ENCODE measurements at regions of chr5 and their contacts with region 1.

Region 1: GRCh38 chr5:150458819-150459557 is 9.4 kb upstream of the RPS14 start:
- DNase-seq: peak; percentile 90
- ATAC-seq: peak; percentile 93
- H3K4me3 Mint-ChIP-seq: peak overlapping the region; percentile 31
- H3K27ac Mint-ChIP-seq: peak overlapping the region; percentile 83
- H3K4me1 Mint-ChIP-seq: peaks cover 45% of the 10 kb centered on the region
- H3K27me3 Mint-ChIP-seq: no peaks in the 10 kb centered on the region

Region 2: GRCh38 chr5:150180241-150181026 is 278.6 kb before region 1 on chr5:
- CTCF ChIA-PET with region 1: no interaction called
- POLR2A ChIA-PET with region 1: no interaction called
- DNase-seq: no peak
- ATAC-seq: no peak
- H3K4me3 Mint-ChIP-seq: no peak overlapping the region
- H3K27ac Mint-ChIP-seq: no peak overlapping the region
- H3K4me1 Mint-ChIP-seq: no peaks in the 10 kb centered on the region
- H3K27me3 Mint-ChIP-seq: peaks cover 7% of the 10 kb centered on the region

Region 3: DNA sequence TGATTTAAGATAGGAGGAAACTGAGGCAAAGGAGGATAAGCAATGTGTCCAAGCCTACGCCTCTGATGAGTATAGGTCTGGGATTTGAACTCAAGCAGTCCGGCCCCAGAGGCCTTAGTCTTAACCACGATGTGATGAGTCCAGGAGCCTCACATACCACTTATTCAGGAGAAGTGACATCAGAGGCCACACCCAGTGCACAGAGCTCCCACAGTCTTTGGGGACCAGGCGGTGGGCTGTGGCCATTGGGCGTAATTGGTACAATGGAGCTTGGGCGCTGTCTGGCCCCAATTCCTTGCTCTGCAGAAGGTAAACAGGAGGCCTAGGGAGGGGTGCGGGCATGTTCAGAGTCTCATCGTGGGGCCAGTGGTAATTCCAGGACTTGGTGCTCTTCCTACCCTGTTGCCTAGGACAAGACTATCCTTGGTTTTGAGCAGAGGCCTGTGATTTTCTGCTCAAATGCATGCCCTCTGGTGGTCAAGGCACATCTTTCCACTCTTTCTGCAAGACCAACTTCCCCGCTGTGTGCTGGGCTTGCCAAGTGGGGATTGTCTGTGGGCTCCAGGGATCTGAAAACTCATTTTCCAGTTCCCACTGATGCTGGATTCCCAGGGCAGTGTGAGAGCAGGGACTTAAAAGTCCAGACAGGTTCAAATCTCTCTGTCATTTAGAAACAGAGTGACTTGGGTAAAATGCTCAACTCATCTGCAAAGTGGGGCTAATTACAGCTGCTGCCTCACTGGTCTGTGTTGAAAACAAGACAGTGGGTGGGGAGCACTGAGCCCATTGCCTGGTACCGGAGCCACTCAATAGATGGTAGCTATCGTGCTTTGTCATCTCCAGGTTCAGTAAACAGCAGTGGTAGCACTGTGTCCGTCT is 64.7 kb after region 1 on chr5:
- CTCF ChIA-PET with region 1: interaction called, 45 read pairs
- POLR2A ChIA-PET with region 1: no interaction called
- DNase-seq: peak; percentile 47
- ATAC-seq: peak; percentile 69
- H3K4me3 Mint-ChIP-seq: no peak overlapping the region
- H3K27ac Mint-ChIP-seq: no peak overlapping the region
- H3K4me1 Mint-ChIP-seq: peaks cover 5% of the 10 kb centered on the region
- H3K27me3 Mint-ChIP-seq: no peaks in the 10 kb centered on the region

Region 4: DNA sequence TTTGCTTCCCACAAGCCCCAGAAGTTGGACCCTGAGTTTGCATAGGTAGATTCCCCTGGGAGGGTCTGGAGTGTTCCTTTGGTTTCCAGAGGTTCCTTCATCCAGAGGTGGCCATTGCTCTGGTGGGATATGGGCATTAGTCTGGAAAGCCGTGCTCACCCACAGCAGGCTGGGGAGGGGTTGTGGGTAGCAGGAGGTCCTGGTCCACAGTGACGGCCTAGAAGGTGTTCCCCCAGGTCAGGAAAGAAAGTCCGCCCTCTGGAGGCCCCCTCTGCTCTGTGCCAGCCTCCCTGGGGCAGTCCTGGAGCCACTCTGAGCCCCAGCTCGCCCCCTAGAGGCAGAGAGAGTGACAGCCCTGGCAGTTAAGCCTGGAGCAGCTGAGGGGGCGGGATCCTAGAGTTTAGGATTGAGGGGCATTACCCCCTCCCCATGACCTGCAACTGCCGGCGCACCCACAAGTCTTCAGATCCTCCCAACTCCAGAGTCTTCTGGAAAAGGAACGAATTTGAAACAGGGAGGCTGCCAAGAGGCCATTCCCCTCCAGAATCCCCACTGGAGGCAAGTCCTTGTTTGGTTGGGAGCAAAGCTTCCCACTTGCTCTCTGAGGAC is 85.7 kb after region 1 on chr5:
- CTCF ChIA-PET with region 1: interaction called, 18 read pairs
- POLR2A ChIA-PET with region 1: interaction called, 3 read pairs
- DNase-seq: peak; percentile 76
- ATAC-seq: peak; percentile 93
- H3K4me3 Mint-ChIP-seq: no peak overlapping the region
- H3K27ac Mint-ChIP-seq: no peak overlapping the region
- H3K4me1 Mint-ChIP-seq: no peaks in the 10 kb centered on the region
- H3K27me3 Mint-ChIP-seq: no peaks in the 10 kb centered on the region

Region 5: GRCh38 chr5:150560401-150561193 is 101.6 kb after region 1 on chr5:
- CTCF ChIA-PET with region 1: interaction called, 10 read pairs
- POLR2A ChIA-PET with region 1: no interaction called
- DNase-seq: peak; percentile 91
- ATAC-seq: peak; percentile 94
- H3K4me3 Mint-ChIP-seq: no peak overlapping the region
- H3K27ac Mint-ChIP-seq: no peak overlapping the region
- H3K4me1 Mint-ChIP-seq: peaks cover 4% of the 10 kb centered on the region
- H3K27me3 Mint-ChIP-seq: peaks cover 2% of the 10 kb centered on the region

Measured in activated CD8-positive, alpha-beta T cell treated with anti-CD3 and anti-CD28 coated beads, Interleukin-2, amount 10 ng/mL, durations not matched to agents 7 days and 5 days (primary cell).